PC-3 (cell line): ENCODE measurements at regions of chr10 and their contacts with region 1.

Region 1: DNA sequence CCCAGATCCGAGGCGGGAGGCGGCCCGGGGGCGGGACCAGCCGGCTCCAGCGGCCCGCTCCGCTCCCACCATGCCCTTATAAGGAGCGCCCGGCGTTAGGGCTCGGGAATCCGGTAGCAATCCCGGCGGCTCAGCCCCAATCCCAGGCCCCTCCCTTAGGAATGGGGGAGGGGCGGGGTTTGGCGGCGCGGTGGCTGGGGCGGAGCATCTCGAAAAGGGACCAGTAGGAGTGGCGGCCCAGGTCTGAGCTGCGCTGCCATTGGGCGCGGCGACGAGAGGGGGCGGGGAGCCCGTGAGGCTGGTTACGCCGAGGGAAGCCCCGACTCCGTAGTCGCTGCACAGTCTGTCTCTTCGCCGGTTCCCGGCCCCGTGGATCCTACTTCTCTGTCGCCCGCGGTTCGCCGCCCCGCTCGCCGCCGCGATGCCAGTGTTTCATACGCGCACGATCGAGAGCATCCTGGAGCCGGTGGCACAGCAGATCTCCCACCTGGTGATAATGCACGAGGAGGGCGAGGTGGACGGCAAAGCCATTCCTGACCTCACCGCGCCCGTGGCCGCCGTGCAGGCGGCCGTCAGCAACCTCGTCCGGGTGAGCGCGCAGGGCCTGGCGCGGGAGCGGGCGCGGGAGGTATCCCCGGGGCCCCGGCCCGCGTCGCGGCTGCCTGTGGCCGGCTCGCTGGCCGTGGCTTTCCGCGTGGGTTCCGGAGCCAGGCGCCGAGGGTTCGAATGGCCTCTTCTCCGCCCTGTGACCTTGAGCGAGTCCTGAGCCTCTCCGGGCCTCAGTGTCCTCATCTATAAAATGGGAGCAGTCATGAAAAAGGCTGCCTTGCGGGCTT is at the start of gene VCL:
- DNase-seq: peak; percentile 100
- ATAC-seq: peak; percentile 83
- H3K4me3 ChIP-seq: peak within 1 kb of the TSS; percentile 73
- H3K27ac ChIP-seq: peak within 1 kb of the TSS; percentile 66
- H3K4me1 ChIP-seq: peaks cover 32% of the 10 kb centered on the region
- H3K27me3 ChIP-seq: no peaks in the 10 kb centered on the region
- CTCF ChIP-seq: no peak
- total RNA-seq, gene VCL: 382 and 445 TPM in 2 replicates

Region 2: GRCh38 chr10:73772280-73773151 is 225.5 kb before region 1 on chr10:
- CTCF ChIA-PET with region 1: no interaction called
- POLR2A ChIA-PET with region 1: interaction called, 3 read pairs
- intact Hi-C with region 1: loop called (anchors 5 kb)
- DNase-seq: peak; percentile 99
- ATAC-seq: peak; percentile 66
- H3K4me3 ChIP-seq: peak overlapping the region; percentile 73
- H3K27ac ChIP-seq: peak overlapping the region; percentile 71
- H3K4me1 ChIP-seq: peaks cover 26% of the 10 kb centered on the region
- H3K27me3 ChIP-seq: no peaks in the 10 kb centered on the region
- CTCF ChIP-seq: peak; percentile 53

Region 3: GRCh38 chr10:73956476-73957359 is 41.3 kb before region 1 on chr10:
- CTCF ChIA-PET with region 1: interaction called, 10 read pairs
- POLR2A ChIA-PET with region 1: no interaction called
- intact Hi-C with region 1: loop called (anchors 1 kb)
- DNase-seq: peak; percentile 67
- ATAC-seq: peak; percentile 39
- H3K4me3 ChIP-seq: no peak overlapping the region
- H3K27ac ChIP-seq: no peak overlapping the region
- H3K4me1 ChIP-seq: peaks cover 11% of the 10 kb centered on the region
- H3K27me3 ChIP-seq: no peaks in the 10 kb centered on the region
- CTCF ChIP-seq: no peak

Region 4: GRCh38 chr10:74027702-74028101 is 29.7 kb after region 1 on chr10:
- CTCF ChIA-PET with region 1: interaction called, 7 read pairs
- POLR2A ChIA-PET with region 1: interaction called, 8 read pairs
- intact Hi-C with region 1: loop called (anchors 1 kb)
- DNase-seq: peak; percentile 89
- ATAC-seq: no peak
- H3K4me3 ChIP-seq: no peak overlapping the region
- H3K27ac ChIP-seq: peak overlapping the region; percentile 2
- H3K4me1 ChIP-seq: peaks cover 33% of the 10 kb centered on the region
- H3K27me3 ChIP-seq: no peaks in the 10 kb centered on the region
- CTCF ChIP-seq: no peak

Region 5: DNA sequence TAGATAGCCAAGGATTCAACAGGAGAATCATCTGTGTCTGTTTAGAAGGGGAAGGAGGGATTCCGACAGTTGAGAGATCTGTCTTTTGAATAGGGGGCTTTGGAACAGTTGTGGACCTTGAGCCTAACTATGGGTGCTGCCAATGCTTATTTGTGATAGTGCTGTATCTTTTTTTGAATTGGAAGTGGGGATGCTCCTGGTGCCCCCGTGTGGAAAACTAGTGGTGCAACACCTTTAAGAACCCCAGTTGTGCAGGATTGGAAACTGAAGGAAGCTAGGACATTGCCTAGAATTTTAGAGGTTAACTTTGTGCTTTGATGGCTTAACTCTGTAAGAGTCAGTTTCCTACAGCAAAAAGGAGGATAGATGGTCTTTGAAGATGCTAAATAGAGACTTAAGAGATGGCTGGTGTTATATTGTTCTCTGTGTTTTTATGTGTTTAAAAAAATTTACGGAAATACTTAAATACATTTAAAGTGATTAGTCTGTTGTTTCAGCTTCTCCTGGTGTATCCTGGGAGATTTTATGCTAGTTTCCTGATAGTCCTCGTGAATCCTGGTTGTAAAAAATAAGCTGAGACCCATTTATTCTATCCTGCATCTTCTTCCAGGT is 83.3 kb after region 1 on chr10:
- CTCF ChIA-PET with region 1: interaction called, 10 read pairs
- POLR2A ChIA-PET with region 1: interaction called, 5 read pairs
- intact Hi-C with region 1: loop called (anchors 1 kb)
- DNase-seq: peak; percentile 94
- ATAC-seq: peak; percentile 49
- H3K4me3 ChIP-seq: no peak overlapping the region
- H3K27ac ChIP-seq: no peak overlapping the region
- H3K4me1 ChIP-seq: peaks cover 43% of the 10 kb centered on the region
- H3K27me3 ChIP-seq: no peaks in the 10 kb centered on the region
- CTCF ChIP-seq: no peak

Region 6: DNA sequence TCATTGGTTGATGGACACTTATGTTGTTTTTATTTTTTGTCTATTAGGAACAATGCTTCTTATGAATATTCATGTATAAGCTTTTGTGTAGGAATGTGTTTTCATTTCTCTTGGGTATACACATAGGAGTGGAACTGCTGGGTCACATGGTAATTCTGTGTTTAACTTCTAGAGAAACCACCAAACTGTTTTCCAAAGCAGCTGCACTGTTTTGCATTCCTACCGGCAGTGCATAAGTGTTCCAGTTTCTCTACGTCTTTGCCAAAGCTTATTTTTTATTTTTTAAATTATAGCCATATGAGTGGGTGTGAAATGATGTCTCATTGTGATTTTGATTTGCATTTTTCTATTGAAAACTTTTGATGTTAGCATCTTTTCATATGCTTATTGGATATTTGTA is 204.4 kb after region 1 on chr10:
- CTCF ChIA-PET with region 1: no interaction called
- POLR2A ChIA-PET with region 1: interaction called, 10 read pairs
- intact Hi-C with region 1: no loop called
- DNase-seq: no peak
- ATAC-seq: no peak
- H3K4me3 ChIP-seq: no peak overlapping the region
- H3K27ac ChIP-seq: no peak overlapping the region
- H3K4me1 ChIP-seq: peaks cover 17% of the 10 kb centered on the region
- H3K27me3 ChIP-seq: no peaks in the 10 kb centered on the region
- CTCF ChIP-seq: no peak